ENCODE measurements at regions of chr1 and their contacts with region 1.

Region 1: GRCh38 chr1:239053279-239053678 is 333.1 kb upstream of the CHRM3 start:
- DNase-seq: no peak
- ATAC-seq: no peak
- H3K4me3 ChIP-seq: no peak overlapping the region
- H3K27ac ChIP-seq: no peak overlapping the region
- H3K4me1 ChIP-seq: no peaks in the 10 kb centered on the region
- H3K27me3 ChIP-seq: no peaks in the 10 kb centered on the region
- CTCF ChIP-seq: no peak

Region 2: DNA sequence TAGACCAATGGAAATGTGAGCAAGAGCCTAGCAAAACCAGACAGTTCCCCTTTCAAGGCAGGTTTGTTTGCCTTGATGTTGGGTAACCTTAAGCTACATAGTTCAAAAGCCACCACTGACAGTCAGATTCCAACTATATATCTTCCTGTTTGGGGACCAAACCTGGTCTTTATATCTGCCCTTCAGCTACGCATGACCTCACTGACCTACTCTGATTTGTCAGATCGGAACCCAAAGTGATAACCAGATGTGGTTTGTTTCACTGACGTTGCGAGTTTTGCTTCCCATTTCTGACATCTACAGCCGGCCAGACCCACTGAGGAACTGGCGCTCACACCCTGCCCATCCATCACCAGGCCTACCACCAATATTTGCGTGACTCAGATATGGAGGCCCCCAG is 28.1 kb before region 1 on chr1:
- intact Hi-C with region 1: no loop called
- DNase-seq: no peak
- ATAC-seq: no peak
- H3K4me3 ChIP-seq: no peak overlapping the region
- H3K27ac ChIP-seq: no peak overlapping the region
- H3K4me1 ChIP-seq: no peaks in the 10 kb centered on the region
- H3K27me3 ChIP-seq: no peaks in the 10 kb centered on the region
- CTCF ChIP-seq: no peak

Region 3: DNA sequence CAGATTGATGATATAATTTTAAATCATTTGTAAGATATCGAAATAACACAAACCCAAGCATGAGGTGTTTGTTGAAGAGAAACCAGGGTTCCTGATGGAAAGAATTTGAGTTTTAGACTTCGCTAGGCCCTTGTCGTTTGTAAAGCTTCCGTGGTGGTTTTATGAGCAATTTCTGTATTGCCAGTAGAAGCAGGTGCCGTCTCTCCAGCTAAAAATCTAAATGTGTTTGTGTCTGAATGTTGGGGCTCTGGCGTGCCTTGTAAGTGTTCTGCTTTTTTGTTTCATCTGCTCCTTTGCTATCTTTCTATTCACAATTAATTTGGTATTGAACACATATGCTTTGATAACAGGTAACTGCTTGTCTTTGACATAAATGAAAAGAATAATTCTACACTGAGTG is 360.6 kb after region 1 on chr1:
- intact Hi-C with region 1: loop called in 1 of 10 experiments (anchors 5 kb)
- DNase-seq: no peak
- ATAC-seq: no peak
- H3K4me3 ChIP-seq: no peak overlapping the region
- H3K27ac ChIP-seq: no peak overlapping the region
- H3K4me1 ChIP-seq: no peaks in the 10 kb centered on the region
- H3K27me3 ChIP-seq: no peaks in the 10 kb centered on the region
- CTCF ChIP-seq: no peak

Measured in heart right ventricle (tissue), 16 donors.